CD4-positive, alpha-beta memory T cell (primary cell): ENCODE measurements at regions of chr12 and their contacts with region 1.

Region 1: DNA sequence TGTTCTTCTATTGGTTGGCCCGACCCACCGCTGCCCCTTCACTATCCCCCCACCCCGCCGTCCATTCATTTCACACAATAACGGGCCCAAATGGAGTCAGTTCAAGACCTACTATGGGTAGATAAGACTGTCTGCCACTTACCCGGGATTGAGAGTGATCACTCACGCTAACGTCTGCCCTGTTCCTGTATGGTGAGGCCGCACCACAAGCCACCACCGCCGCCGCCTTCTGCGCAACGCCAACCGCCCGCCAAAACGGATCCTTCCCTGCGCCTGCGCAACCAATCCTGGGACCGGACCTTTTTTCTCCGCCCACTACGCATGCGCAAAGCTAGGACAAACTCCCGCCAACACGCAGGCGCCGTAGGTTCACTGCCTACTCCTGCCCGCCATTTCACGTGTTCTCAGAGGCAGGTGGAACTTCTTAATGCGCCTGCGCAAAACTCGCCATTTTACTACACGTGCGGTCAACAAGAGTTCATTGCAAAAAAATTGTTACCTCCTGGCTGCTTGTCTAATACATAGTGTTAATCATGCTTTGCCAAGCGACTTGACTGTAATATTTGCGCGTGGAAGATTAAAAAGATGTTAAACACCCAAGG is at the start of gene CBX5:
- DNase-seq: peak; percentile 99 to 100 (median 100)
- H3K4me3 ChIP-seq: peak within 1 kb of the TSS; percentile 90 to 94
- H3K4me3 Mint-ChIP-seq: no peak within 1 kb of the TSS
- H3K27ac ChIP-seq: peak within 1 kb of the TSS; percentile 92
- H3K27ac Mint-ChIP-seq: no peak within 1 kb of the TSS
- H3K4me1 ChIP-seq: peaks cover 76% of the 10 kb centered on the region
- H3K4me1 Mint-ChIP-seq: peaks cover 20 to 55% (median 34%) of the 10 kb centered on the region in 4 donors
- H3K27me3 ChIP-seq: no peaks in the 10 kb centered on the region
- H3K27me3 Mint-ChIP-seq: no peaks in the 10 kb centered on the region
- total RNA-seq, gene CBX5: 71.0 to 76.3 TPM

Region 2: DNA sequence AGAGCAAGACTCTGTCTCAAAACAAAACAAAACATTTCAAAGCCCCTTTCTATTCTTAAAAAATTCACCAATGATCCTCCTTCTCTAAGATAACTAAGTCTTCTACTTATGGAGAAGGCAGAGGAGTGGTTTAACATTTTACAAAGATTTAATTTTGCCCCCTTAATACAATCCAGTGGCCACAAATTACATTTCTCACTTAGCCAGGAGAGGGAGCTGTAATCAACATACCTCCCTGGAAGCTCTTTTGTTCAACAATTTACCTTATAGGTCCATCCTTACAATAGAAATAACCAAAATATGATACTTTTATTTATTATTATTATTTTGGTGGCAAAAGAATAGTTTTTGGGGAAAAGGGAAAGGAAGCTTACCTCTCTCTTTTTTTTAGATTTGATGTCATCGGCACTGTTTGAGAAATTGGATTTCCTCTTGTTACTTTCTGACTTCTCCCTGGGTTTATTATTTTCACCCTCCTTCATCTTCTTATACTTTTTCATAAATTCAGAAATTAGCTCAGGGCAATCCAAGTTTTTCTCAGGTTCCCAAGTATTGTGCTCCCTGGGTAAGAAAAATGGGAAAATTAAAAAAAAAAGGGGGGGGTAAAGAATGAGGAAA is 28.2 kb before region 1 on chr12:
- CTCF ChIA-PET with region 1: interaction called, 14 read pairs
- POLR2A ChIA-PET with region 1: interaction called, 13 read pairs
- intact Hi-C with region 1: no loop called
- DNase-seq: peak in 4 of 5 donors; percentile 36 to 52 (median 46)
- H3K4me3 ChIP-seq: no peak overlapping the region
- H3K4me3 Mint-ChIP-seq: no peak overlapping the region
- H3K27ac ChIP-seq: no peak overlapping the region
- H3K27ac Mint-ChIP-seq: peak overlapping the region in 1 of 7 donors; percentile 63
- H3K4me1 ChIP-seq: no peaks in the 10 kb centered on the region
- H3K4me1 Mint-ChIP-seq: peaks cover 4 to 9% (median 6%) of the 10 kb centered on the region in 4 donors
- H3K27me3 ChIP-seq: no peaks in the 10 kb centered on the region
- H3K27me3 Mint-ChIP-seq: no peaks in the 10 kb centered on the region

Region 3: GRCh38 chr12:54265364-54265812 is 14.6 kb before region 1 on chr12:
- CTCF ChIA-PET with region 1: no interaction called
- POLR2A ChIA-PET with region 1: interaction called, 11 read pairs
- intact Hi-C with region 1: no loop called
- DNase-seq: no peak
- H3K4me3 ChIP-seq: no peak overlapping the region
- H3K4me3 Mint-ChIP-seq: no peak overlapping the region
- H3K27ac ChIP-seq: no peak overlapping the region
- H3K27ac Mint-ChIP-seq: peak overlapping the region in 2 of 7 donors; percentile 5 to 19
- H3K4me1 ChIP-seq: no peaks in the 10 kb centered on the region
- H3K4me1 Mint-ChIP-seq: peaks cover 5 to 19% (median 9%) of the 10 kb centered on the region in 4 donors
- H3K27me3 ChIP-seq: no peaks in the 10 kb centered on the region
- H3K27me3 Mint-ChIP-seq: no peaks in the 10 kb centered on the region

Region 4: GRCh38 chr12:54324617-54325441 is 44.9 kb after region 1 on chr12 and contains the start of gene COPZ1:
- CTCF ChIA-PET with region 1: interaction called, 25 read pairs
- POLR2A ChIA-PET with region 1: interaction called, 69 read pairs
- intact Hi-C with region 1: loop called (anchors 1 kb)
- DNase-seq: peak; percentile 93 to 99 (median 95)
- H3K4me3 ChIP-seq: peak within 1 kb of the TSS; percentile 92 to 93
- H3K4me3 Mint-ChIP-seq: peak within 1 kb of the TSS; percentile 94 to 100 (median 98)
- H3K27ac ChIP-seq: peak within 1 kb of the TSS; percentile 86
- H3K27ac Mint-ChIP-seq: peak within 1 kb of the TSS; percentile 93 to 99 (median 98)
- H3K4me1 ChIP-seq: peaks cover 44% of the 10 kb centered on the region
- H3K4me1 Mint-ChIP-seq: peaks cover 28 to 47% (median 38%) of the 10 kb centered on the region in 4 donors
- H3K27me3 ChIP-seq: no peaks in the 10 kb centered on the region
- H3K27me3 Mint-ChIP-seq: no peaks in the 10 kb centered on the region
- total RNA-seq, gene COPZ1: 81.6 to 92.0 TPM

Region 5: DNA sequence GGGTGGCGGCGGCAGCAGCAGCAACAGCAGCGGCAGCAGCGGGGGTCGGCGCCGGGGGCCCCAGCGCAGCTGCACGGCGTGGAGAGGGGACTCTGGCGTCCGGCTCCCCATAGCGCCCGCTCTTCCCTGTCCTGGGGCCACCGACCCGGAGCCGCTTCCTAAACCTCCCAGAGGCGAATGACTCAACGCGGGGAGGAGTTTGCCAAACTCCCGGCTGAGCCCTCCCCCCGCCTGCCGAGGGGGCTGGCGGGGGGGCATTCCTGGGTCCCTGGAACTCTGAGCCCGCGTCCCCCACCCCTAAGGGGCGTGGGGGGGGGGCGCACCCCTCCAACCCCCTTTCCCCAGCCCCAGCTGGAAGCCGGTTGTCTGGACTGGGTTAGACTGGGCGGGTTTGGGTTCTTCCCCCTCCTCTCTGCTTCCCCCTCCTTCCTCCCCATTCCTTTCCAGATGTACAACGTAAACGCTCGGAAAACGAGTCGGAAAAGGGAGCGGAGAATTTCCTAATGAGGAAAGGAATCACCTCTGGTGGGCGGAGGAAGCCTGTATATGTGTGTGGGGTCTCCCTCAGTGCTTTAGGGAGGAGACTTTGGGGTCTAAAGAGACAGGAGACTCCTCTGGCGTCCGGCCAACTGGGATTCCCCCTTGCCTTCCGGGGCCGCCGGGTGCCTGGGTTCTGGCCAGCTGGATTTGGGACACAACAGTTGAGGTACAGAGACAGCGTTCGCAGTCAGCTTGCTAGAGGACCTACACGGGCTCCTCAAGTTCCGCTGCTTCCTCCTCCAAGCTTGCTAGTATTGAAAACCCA is 139.3 kb after region 1 on chr12 and contains the start of gene ITGA5:
- CTCF ChIA-PET with region 1: no interaction called
- POLR2A ChIA-PET with region 1: interaction called, 16 read pairs
- intact Hi-C with region 1: no loop called
- DNase-seq: peak in 3 of 5 donors; percentile 23 to 57 (median 27)
- H3K4me3 ChIP-seq: peak within 1 kb of the TSS; percentile 55 to 81
- H3K4me3 Mint-ChIP-seq: peak within 1 kb of the TSS; percentile 96 to 98 (median 98)
- H3K27ac ChIP-seq: peak within 1 kb of the TSS; percentile 91
- H3K27ac Mint-ChIP-seq: peak within 1 kb of the TSS; percentile 90 to 99 (median 98)
- H3K4me1 ChIP-seq: peaks cover 46% of the 10 kb centered on the region
- H3K4me1 Mint-ChIP-seq: peaks cover 34 to 73% (median 39%) of the 10 kb centered on the region in 4 donors
- H3K27me3 ChIP-seq: no peaks in the 10 kb centered on the region
- H3K27me3 Mint-ChIP-seq: peaks cover 0 to 1% of the 10 kb centered on the region in 2 donors
- total RNA-seq, gene ITGA5: 158 to 162 TPM